ENCODE measurements at regions of chr5 and their contacts with region 1.

Region 1: DNA sequence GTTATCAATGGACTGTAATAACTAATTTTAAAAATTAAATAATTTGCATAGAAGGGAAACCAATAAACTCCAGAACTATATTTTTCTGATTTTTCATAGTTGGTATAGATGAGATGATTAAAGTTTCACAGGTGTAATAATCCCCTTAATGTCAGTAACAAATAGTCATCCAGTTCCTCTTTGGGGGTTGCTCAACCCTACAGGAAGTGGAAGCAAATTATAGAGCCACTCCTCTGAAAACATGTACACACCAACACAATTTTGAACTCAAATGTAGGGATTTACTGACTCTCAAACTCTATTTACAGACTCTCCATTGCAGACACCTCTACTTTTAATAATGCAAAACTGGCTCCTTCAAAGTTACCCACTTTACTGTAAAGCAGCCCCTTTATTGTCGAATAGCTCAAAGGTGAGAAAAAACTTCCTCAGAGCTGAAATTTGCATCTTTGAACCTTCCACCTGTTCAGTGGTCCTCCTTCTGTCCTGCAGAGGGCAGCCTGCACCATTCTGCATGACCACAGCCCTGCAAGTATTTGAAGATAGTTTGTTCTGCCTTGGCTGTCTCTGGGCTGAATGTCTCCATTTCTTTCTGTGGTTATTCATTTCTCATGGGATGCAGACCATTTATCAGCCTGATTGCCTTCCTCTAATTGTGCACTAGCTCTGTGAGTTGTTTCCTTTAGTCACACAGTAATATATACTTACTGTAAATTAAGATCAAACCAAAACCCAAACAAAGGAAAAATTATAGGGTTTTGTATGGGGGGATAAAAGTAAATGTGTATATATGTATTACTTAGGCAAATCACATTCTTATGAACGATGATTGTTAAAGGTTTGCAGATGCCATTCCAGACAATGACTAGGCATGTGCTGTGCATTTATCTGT is 383.2 kb upstream of the SGCD start:
- DNase-seq: no peak
- H3K4me3 Mint-ChIP-seq: no peak overlapping the region
- H3K27ac Mint-ChIP-seq: no peak overlapping the region
- H3K4me1 Mint-ChIP-seq: peaks cover 5% of the 10 kb centered on the region
- H3K27me3 Mint-ChIP-seq: peaks cover 1% of the 10 kb centered on the region

Region 2: DNA sequence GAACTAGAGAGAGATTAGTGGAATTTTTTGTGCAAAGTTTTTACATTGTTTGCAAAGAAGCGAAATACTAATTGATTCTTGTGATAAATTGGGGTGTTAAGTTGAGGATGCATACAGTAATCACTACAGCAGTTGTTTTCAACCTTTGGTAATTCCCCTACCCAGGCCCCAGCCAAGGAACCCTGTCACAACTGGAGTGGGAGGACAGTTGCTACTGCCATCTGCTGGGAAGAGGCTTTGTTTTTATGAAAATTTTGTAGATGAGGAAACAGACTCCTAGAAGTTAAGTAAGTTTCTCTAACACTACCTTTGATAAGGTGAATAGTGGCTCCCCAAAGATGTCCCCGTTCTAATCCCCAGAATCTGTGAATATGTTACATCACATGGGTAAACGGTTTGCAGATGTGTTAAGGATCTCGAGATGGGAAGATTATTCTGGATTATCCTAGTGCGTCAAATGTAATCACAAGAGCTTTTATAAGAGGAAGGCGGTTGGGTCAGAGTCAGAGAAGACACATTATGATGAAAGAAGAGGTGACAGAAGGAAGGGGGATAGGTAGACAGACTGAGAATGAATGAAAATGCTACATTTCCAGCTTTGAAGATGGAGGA is 872.3 kb after region 1 on chr5:
- intact Hi-C with region 1: loop called (anchors 10 kb)
- DNase-seq: no peak
- H3K4me3 Mint-ChIP-seq: no peak overlapping the region
- H3K27ac Mint-ChIP-seq: no peak overlapping the region
- H3K4me1 Mint-ChIP-seq: peaks cover 2% of the 10 kb centered on the region
- H3K27me3 Mint-ChIP-seq: peaks cover 2% of the 10 kb centered on the region

Measured in activated T-helper 2 cell treated with anti-CD3 and anti-CD28 coated beads, Interferon-gamma antibody, Interleukin-2, Interleukin-4, amounts not matched to agents 10 μg/mL and 5 μg/mL and 100 μg/mL, durations not matched to agents 14 hours and 24 hours and 36 hours (primary cell).